ENCODE measurements at regions of chr2 and their contacts with region 1.

Region 1: DNA sequence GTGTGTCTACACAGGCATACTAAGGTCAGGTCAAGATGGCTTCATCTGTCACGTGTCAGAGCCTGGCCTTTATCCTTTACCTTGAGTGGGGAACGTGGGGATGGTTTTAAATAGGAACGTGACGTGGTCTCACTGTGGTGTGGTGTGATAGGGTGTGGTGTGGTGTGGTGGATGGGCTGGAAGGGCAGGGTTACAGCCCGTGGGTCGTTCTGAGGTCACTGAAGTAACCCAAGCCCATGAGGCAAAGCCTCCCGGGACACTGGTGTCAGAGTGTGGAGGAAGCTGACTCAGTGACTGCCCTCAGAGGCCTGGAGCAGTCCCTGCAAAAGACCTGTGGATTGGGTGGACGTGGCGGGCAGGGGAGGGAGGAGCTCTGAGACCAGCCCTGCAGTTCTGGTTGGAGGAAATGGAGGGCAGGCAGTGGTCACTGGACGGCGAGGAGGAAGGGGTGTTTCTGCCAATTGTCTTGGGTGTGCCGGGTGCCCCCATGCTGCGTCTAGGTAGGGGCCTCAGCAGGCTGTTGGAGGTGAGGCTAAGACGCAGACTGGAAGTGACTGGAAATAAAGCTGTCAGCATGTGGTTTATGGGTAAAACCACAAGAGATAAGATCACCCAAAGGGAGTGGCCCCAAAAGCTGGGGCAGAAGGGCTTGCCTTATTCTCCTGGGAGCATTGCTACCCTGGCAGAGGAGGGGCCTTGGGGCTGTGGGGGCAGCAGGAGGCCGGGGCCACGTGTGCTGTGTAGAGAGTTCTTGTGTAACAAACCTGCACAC is 84.8 kb downstream of the SH3RF3 start:
- DNase-seq: no peak
- H3K4me3 ChIP-seq: no peak overlapping the region
- H3K27ac ChIP-seq: no peak overlapping the region
- H3K4me1 ChIP-seq: peaks cover 0 to 4% of the 10 kb centered on the region in 2 donors
- H3K27me3 ChIP-seq: no peaks in the 10 kb centered on the region
- CTCF ChIP-seq: no peak
- POLR2A ChIP-seq: no peak

Region 2: GRCh38 chr2:109234355-109234754 is 20.5 kb after region 1 on chr2:
- intact Hi-C with region 1: loop called (anchors 2 kb)
- DNase-seq: no peak
- H3K4me3 ChIP-seq: no peak overlapping the region
- H3K27ac ChIP-seq: no peak overlapping the region
- H3K4me1 ChIP-seq: no peaks in the 10 kb centered on the region
- H3K27me3 ChIP-seq: no peaks in the 10 kb centered on the region
- CTCF ChIP-seq: no peak
- POLR2A ChIP-seq: no peak